Naive thymus-derived CD4-positive, alpha-beta T cell (primary cell): ENCODE measurements at regions of chr15 and their contacts with region 1.

Region 1: DNA sequence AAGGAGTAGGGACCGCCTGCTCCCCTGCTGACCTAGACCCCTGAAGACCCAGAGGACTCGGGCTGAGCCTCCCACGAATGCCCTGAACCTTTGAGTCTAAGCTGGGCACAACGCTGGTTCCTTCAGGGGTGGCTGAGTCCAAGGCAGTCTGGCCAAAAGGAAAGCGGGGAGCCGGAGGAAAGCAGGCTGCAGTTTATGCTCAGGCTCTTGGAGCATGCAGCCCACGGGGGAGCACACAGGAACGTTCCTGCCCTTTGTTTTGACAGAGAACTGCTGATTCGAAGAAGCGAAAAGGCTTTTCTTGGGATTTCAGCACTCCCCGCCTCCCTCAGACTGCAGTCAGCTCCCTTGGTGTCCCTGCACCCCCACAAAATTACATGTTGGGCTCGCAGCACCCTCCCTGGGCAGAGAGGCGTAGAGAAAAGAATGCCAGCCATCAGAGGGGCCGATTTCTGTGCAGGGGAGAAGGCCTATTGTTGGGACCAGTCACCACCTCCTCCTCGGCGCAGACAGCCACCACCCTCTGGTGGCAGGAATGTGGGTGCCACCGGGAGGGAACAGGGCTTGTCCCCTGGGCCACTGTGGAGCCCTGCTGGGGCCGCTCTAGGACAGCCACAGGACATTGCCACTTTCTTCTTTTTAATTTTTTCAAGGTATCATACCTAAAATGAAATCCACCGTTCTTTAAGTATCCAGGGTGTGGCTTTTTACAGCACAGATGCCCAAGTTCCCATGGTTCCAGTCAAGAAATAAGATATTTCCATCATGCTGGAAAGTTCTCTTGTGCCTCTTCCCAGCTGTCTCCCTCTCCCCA is 72.2 kb downstream of the SMAD6 start:
- DNase-seq: peak; percentile 20 to 66 (median 55)
- ATAC-seq: peak; percentile 61
- H3K4me3 ChIP-seq: no peak overlapping the region
- H3K4me3 Mint-ChIP-seq: no peak overlapping the region
- H3K27ac ChIP-seq: no peak overlapping the region
- H3K27ac Mint-ChIP-seq: no peak overlapping the region
- H3K4me1 ChIP-seq: no peaks in the 10 kb centered on the region
- H3K4me1 Mint-ChIP-seq: no peaks in the 10 kb centered on the region
- H3K27me3 ChIP-seq: peaks cover 0 to 4% of the 10 kb centered on the region in 2 donors
- H3K27me3 Mint-ChIP-seq: peaks cover 0 to 4% (median 0%) of the 10 kb centered on the region in 5 donors

Region 2: DNA sequence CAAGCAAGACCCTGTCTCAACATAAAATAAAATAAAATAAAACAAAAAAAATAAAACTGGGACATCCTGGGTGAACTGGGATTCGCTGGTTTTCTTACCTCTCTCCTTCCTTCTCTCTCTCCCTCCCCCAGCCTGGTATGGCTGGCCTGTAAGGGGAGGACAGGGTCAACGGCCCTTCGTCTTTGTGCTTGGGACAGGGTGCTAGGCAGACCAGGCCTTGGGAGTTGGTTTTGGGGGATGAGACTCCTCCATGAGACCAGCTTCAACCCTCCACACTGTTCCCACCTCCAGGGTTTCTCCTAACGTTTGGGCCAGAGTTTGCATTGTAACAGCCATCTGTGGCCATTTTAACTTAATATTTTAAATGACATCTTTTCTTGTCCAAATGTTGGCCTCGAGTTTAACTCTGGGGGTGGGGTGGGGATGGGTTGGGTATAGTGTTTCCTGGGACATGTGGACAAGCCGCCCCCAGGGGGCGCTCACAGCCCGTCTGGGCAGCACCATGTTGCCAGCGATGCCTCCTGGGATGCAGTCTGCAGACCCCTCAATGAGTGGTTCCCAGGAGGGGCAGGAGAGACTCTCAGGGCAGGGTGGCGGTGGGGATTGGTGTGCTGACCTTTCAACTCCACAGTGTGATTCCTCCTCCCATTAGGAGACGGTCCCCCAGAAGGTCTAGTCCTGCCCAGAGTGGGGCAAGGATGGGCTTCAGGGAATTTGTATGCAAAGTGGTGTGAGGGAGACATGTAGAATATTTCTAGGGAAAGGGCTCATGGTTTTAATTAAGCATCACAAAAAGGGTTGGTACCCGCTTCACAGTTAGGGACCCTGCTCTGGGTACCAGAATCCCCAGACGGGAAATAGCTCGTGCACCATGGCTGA is 170.7 kb before region 1 on chr15:
- CTCF ChIA-PET with region 1: interaction called, 11 read pairs
- POLR2A ChIA-PET with region 1: no interaction called
- intact Hi-C with region 1: loop called (anchors 1 kb)
- DNase-seq: peak; percentile 22 to 72 (median 60)
- ATAC-seq: peak; percentile 75
- H3K4me3 ChIP-seq: no peak overlapping the region
- H3K4me3 Mint-ChIP-seq: no peak overlapping the region
- H3K27ac ChIP-seq: no peak overlapping the region
- H3K27ac Mint-ChIP-seq: no peak overlapping the region
- H3K4me1 ChIP-seq: no peaks in the 10 kb centered on the region
- H3K4me1 Mint-ChIP-seq: peaks cover under 1 to 2% (median under 1%) of the 10 kb centered on the region in 7 donors
- H3K27me3 ChIP-seq: no peaks in the 10 kb centered on the region
- H3K27me3 Mint-ChIP-seq: peaks cover 0 to 5% (median 4%) of the 10 kb centered on the region in 5 donors

Region 3: DNA sequence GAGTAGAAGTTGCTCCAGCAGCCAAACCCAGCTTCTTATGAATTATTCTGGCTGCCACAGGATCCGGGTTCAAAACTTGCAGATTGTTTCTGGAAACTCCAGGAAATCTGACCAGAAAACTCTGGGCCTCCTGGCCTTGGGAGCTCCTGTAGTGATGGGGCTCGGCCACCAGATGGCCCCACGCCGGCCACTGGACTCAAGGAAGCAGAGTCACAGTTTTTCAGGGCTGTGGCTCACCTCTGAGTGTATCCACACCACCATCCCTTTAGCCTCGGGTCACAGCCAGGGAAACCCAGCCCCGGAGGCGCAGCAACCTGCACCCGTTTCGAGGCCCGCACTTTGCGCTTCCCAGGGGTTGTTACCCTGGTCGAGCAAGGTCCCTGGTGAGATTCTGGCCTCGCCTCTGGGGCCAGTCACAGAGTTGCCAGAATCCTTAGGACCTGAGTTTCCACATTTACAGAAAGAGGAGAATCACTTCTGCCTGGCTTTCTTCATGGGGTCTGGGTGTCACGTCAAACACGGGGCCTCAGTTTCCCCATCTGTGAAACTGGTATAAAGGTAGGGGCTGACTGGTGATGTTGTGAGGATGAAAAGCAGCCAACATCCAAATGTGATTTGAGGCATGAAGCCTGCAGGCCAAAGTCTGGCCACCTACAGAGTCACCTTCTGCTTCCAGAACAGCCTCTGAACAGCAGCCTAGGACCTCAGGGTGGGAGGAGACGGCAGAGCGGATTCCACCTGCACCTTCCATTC is 154.9 kb before region 1 on chr15:
- CTCF ChIA-PET with region 1: interaction called, 19 read pairs
- POLR2A ChIA-PET with region 1: no interaction called
- intact Hi-C with region 1: loop called (anchors 1 kb)
- DNase-seq: peak in 8 of 9 donors; percentile 3 to 56 (median 32)
- ATAC-seq: peak; percentile 56
- H3K4me3 ChIP-seq: no peak overlapping the region
- H3K4me3 Mint-ChIP-seq: no peak overlapping the region
- H3K27ac ChIP-seq: no peak overlapping the region
- H3K27ac Mint-ChIP-seq: no peak overlapping the region
- H3K4me1 ChIP-seq: no peaks in the 10 kb centered on the region
- H3K4me1 Mint-ChIP-seq: peaks cover 0 to 21% (median 5%) of the 10 kb centered on the region in 7 donors
- H3K27me3 ChIP-seq: peaks cover 0 to 15% of the 10 kb centered on the region in 2 donors
- H3K27me3 Mint-ChIP-seq: peaks cover 23 to 33% (median 32%) of the 10 kb centered on the region in 5 donors

Region 4: GRCh38 chr15:66707310-66708082 is 66.7 kb before region 1 on chr15:
- CTCF ChIA-PET with region 1: no interaction called
- POLR2A ChIA-PET with region 1: no interaction called
- intact Hi-C with region 1: loop called in 1 of 2 experiments (anchors 5 kb)
- DNase-seq: no peak
- ATAC-seq: no peak
- H3K4me3 ChIP-seq: no peak overlapping the region
- H3K4me3 Mint-ChIP-seq: no peak overlapping the region
- H3K27ac ChIP-seq: no peak overlapping the region
- H3K27ac Mint-ChIP-seq: no peak overlapping the region
- H3K4me1 ChIP-seq: peaks cover 3 to 5% of the 10 kb centered on the region in 2 donors
- H3K4me1 Mint-ChIP-seq: peaks cover 2 to 11% (median 9%) of the 10 kb centered on the region in 7 donors
- H3K27me3 ChIP-seq: peaks cover 2 to 5% of the 10 kb centered on the region in 2 donors
- H3K27me3 Mint-ChIP-seq: peaks cover 0 to 22% (median 10%) of the 10 kb centered on the region in 5 donors

Region 5: GRCh38 chr15:66740802-66741201 is 33.4 kb before region 1 on chr15:
- CTCF ChIA-PET with region 1: no interaction called
- POLR2A ChIA-PET with region 1: no interaction called
- intact Hi-C with region 1: no loop called
- DNase-seq: no peak
- ATAC-seq: no peak
- H3K4me3 ChIP-seq: no peak overlapping the region
- H3K4me3 Mint-ChIP-seq: no peak overlapping the region
- H3K27ac ChIP-seq: no peak overlapping the region
- H3K27ac Mint-ChIP-seq: no peak overlapping the region
- H3K4me1 ChIP-seq: no peaks in the 10 kb centered on the region
- H3K4me1 Mint-ChIP-seq: peaks cover 0 to 6% (median 0%) of the 10 kb centered on the region in 7 donors
- H3K27me3 ChIP-seq: no peaks in the 10 kb centered on the region
- H3K27me3 Mint-ChIP-seq: peaks cover 0 to 4% (median 0%) of the 10 kb centered on the region in 5 donors

Region 6: DNA sequence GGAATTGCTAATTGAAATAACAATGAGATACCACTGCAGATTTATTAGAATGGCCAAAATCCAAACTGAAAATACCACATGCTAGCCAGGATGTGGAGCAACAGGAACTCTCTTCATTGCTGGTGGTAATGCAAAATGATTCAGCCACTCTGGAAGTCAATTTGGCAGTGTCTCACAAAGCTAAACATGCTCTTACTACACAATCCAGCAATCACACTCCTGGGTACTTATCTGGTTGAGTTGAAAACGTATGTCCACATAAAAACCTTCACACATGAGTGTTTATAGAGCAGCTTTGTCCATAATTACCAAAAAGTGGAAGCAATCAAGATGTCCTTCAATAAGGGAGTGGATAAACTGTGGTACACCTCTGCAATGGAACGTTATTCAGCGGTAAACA is 41.1 kb after region 1 on chr15:
- CTCF ChIA-PET with region 1: no interaction called
- POLR2A ChIA-PET with region 1: no interaction called
- intact Hi-C with region 1: no loop called
- DNase-seq: no peak
- ATAC-seq: no peak
- H3K4me3 ChIP-seq: no peak overlapping the region
- H3K4me3 Mint-ChIP-seq: no peak overlapping the region
- H3K27ac ChIP-seq: no peak overlapping the region
- H3K27ac Mint-ChIP-seq: no peak overlapping the region
- H3K4me1 ChIP-seq: no peaks in the 10 kb centered on the region
- H3K4me1 Mint-ChIP-seq: no peaks in the 10 kb centered on the region
- H3K27me3 ChIP-seq: peaks cover 0 to 6% of the 10 kb centered on the region in 2 donors
- H3K27me3 Mint-ChIP-seq: peaks cover 0 to 25% (median 10%) of the 10 kb centered on the region in 5 donors

Region 7: DNA sequence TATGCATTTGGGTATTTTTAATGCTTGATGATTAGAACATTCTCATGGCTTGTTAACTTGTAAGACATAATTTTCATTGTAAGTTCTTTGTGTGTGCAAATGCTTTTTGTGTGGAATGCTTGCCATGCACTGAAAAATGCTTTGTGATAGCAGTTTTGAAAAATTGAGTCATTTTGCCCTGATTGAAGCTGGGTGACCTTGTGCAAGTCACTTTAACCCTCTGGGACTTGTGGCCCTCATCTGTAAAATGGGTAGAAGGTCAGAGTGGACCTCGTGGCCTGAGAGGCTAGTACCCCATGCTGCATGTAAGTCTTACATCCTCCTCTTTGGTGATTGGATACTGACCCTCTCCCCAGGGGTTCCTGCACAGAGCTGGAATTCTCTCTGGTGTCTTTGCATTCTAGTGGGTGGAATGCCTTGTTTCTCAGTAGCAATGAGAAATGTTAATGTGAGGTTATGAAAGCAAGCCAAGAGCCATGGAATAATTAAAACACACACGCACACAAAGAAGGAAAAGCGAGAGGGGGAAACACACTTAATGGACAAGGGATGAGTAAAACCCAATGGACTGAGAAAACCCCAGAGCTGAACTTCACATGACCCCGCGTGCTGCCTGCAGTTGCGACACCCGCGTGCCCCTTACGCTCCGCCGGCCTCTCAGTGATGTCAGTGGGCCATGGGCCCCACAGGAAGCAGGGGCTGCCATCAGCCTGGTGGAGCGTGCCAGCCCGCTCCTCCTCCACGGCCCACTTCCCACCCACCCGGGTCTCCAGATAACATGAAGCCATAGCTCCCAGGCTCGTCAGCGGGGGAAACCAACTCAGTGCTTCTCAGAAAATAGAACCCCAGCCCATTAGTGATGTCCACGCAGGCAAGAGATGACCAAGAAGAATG is 335.2 kb after region 1 on chr15:
- CTCF ChIA-PET with region 1: no interaction called
- POLR2A ChIA-PET with region 1: no interaction called
- intact Hi-C with region 1: no loop called
- DNase-seq: no peak
- ATAC-seq: peak; percentile 81
- H3K4me3 ChIP-seq: no peak overlapping the region
- H3K4me3 Mint-ChIP-seq: peak overlapping the region in 2 of 10 donors; percentile 52 to 58
- H3K27ac ChIP-seq: no peak overlapping the region
- H3K27ac Mint-ChIP-seq: peak overlapping the region in 3 of 9 donors; percentile 29 to 79 (median 59)
- H3K4me1 ChIP-seq: peaks cover 72 to 74% of the 10 kb centered on the region in 2 donors
- H3K4me1 Mint-ChIP-seq: peaks cover 22 to 66% (median 51%) of the 10 kb centered on the region in 7 donors
- H3K27me3 ChIP-seq: no peaks in the 10 kb centered on the region
- H3K27me3 Mint-ChIP-seq: no peaks in the 10 kb centered on the region